IMR-90 (cell line): ENCODE measurements at regions of chr1 and their contacts with region 1.

Region 1: DNA sequence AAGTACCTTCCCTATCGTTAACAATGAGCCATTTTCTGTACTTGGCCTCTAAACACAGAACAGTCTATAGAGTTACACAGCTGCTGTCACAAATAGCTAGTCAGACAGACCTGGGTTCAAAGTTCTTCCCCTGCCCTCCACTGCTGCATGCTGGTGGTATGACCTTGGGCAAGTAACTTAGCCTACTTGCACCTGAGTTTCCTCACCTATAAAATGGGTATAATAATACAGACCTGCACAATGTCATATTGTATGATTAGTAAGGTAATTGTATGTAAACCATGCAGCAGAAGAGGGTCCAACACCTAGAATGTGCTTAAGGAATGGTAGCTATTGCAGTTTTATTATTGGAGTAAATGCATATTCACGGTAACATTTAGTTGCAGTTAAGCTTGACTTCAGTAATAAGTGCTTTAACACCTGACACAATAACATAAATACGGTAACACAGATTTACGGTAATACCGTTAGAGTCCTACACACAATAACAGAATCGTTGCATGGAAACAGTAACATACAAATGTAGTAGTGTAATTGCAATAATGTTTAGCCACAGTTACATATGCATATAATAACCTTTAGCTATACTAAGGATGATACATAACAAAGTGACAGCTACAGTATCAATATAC is 193.3 kb upstream of the CSF3R start:
- DNase-seq: no peak
- ATAC-seq: no peak
- H3K4me3 ChIP-seq: no peak overlapping the region
- H3K27ac ChIP-seq: no peak overlapping the region
- H3K4me1 ChIP-seq: no peaks in the 10 kb centered on the region
- H3K27me3 ChIP-seq: no peaks in the 10 kb centered on the region; the same call in 1 of the 2 replicates
- CTCF ChIP-seq: no peak
- POLR2A ChIP-seq: no peak
- RAD21 ChIP-seq: no peak

Region 2: DNA sequence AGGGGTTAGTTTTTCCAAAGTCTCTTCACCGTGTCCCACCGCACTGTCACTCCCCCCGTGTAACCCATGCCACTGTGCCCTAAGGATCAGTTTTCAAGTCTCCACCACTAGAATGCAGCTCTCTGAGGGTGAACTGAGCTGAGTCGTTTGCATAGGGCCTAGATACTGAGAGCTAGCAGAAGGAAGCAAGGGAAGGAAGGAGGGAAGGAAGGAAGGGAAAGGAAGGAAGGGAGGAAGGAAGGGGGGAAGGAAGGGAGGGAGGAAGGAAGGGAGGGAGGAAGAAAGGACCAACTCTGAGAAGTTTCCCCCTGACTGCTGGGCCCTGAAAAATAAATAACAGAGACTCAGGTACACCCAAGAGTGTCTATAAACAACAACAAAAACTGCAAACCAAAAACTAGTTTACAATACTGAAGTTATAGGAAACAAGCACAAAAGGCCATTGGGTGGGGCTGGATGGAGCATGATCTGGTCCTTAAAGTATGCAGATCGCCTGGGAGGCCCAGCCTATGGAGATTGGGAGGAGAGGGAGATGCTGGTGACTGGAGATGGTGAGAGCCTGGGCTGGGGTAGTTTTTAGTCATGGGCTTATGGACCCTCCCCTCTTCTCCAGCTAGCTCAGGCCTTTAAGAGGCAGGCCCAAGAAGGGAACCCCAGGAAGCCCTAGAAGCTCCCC is 210.2 kb before region 1 on chr1:
- CTCF ChIA-PET with region 1: no interaction called
- POLR2A ChIA-PET with region 1: no interaction called
- dilution Hi-C with region 1: no loop called
- in situ Hi-C with region 1: no loop called
- intact Hi-C with region 1: no loop called
- DNase-seq: no peak
- ATAC-seq: no peak
- H3K4me3 ChIP-seq: no peak overlapping the region
- H3K27ac ChIP-seq: no peak overlapping the region
- H3K4me1 ChIP-seq: peaks cover 6% of the 10 kb centered on the region
- H3K27me3 ChIP-seq: no peaks in the 10 kb centered on the region; the same call in 1 of the 2 replicates
- CTCF ChIP-seq: no peak
- POLR2A ChIP-seq: no peak
- RAD21 ChIP-seq: no peak

Region 3: DNA sequence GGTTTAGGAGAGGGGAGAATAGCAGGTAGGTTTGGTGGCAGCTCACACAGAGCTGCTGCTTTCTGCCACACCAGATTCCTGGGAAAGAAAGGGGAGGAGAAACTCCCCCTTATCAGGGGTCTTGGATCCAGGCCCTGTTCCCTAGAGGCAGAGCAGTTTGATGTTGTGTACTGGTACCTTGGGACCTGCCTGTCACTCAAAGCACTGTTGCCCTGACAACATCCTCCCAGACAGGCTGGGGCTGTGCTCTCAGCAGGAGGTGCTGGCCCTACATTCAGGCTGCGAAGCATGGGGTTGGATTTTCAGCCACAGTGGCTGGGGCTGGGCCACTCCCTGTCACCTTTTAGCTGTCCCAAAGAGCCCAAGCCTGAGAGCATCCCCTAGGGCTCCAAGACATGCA is 170.3 kb after region 1 on chr1:
- CTCF ChIA-PET with region 1: no interaction called
- POLR2A ChIA-PET with region 1: no interaction called
- dilution Hi-C with region 1: no loop called
- in situ Hi-C with region 1: no loop called
- intact Hi-C with region 1: no loop called
- DNase-seq: no peak
- ATAC-seq: no peak
- H3K4me3 ChIP-seq: no peak overlapping the region
- H3K27ac ChIP-seq: no peak overlapping the region
- H3K4me1 ChIP-seq: no peaks in the 10 kb centered on the region
- H3K27me3 ChIP-seq: no peaks in the 10 kb centered on the region
- CTCF ChIP-seq: no peak
- POLR2A ChIP-seq: no peak
- RAD21 ChIP-seq: no peak

Region 4: DNA sequence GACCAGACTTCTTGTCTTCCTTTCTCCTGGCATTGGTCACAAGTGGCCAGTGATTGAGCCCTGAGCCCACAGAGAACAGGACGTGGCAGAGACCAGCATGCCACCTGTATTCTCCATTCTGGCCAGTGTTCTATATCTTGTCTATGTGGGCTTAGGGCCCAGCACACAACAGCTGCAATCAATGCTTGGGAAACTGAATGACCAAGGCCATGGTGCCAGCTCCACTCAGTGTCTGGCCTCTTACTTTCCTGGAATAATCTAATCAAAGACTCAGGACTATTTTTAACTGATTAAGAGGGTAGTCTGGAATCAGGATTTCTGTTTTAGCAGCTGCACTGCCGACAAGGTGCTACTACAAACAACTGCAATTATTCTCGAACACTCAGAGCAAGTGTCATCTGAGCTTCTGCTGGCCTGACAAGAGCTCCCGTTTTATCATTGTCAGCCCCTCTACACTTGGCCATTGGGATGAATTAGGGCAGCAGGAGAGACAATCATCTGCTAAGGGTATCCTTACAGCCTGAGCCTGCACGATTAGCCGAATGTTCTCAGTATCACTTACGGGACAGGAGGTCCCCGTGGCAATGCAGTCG is 432.6 kb after region 1 on chr1:
- CTCF ChIA-PET with region 1: interaction called, 10 read pairs
- POLR2A ChIA-PET with region 1: no interaction called
- dilution Hi-C with region 1: no loop called
- in situ Hi-C with region 1: no loop called
- intact Hi-C with region 1: no loop called
- DNase-seq: no peak
- ATAC-seq: no peak
- H3K4me3 ChIP-seq: no peak overlapping the region
- H3K27ac ChIP-seq: no peak overlapping the region
- H3K4me1 ChIP-seq: no peaks in the 10 kb centered on the region
- H3K27me3 ChIP-seq: no peaks in the 10 kb centered on the region
- CTCF ChIP-seq: no peak
- POLR2A ChIP-seq: no peak
- RAD21 ChIP-seq: no peak